GM13977 (cell line): ENCODE measurements at regions of chr4 and their contacts with region 1.

Region 1: DNA sequence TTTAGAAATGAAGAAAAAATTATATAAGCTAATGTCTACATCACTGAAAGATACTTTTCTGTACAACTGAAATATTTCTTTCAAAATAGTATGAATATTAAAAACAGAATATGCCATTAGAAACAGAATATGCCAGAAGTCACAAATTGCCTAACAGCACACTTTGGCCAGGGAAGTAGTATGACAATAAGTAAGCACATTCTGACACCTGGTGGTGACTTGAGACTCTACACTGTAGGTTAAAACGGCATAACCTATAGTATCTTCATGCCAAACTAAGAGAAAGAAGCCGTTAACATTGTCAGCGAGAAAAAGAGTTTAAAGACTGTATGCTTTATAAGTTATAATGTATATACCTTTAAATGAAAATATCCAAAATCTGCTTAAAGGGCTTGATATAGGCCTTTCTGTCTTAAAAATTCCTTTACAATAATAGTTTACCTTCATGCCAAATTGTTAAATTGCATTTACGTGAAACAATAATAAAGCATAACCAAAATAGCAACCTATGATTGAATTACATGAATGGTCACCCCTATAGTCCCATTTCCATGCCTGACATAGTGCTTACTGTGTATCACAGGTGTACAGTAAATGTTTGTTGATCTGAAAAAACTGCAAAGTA is 32.8 kb downstream of the FAM13A start:
- DNase-seq: peak; percentile 50
- CTCF ChIP-seq: peak; percentile 70

Region 2: GRCh38 chr4:88823058-88823919 is 200.9 kb before region 1 on chr4:
- in situ Hi-C with region 1: loop called (anchors 10 kb)
- DNase-seq: peak; percentile 19
- CTCF ChIP-seq: no peak

Region 3: DNA sequence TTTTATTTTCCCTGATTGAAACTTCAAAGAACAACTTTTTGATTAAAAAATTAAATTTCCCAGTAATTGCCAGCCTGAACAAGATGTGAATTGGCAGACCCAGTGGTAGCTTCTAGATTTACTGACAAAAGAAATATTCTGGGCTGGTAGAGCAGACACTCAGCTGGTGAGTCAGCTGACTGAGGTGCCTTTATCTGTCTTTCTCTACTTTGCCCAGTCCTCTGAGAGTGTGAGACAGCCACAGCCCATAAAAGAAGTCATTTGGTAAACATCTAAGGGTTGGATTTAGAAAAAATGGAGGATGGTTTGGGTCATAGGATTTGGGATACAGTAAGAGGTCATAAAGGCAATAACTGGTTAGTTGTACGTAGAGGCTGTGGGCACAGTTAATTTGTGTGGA is 1157.5 kb after region 1 on chr4:
- in situ Hi-C with region 1: no loop called
- DNase-seq: no peak
- CTCF ChIP-seq: no peak